Gastrocnemius medialis (tissue), 4 donors: ENCODE measurements at regions of chr15 and their contacts with region 1.

Region 1: GRCh38 chr15:32943711-32944110 is 225.9 kb downstream of the GREM1 start:
- DNase-seq: no peak
- ATAC-seq: no peak
- H3K4me3 ChIP-seq: no peak overlapping the region
- H3K27ac ChIP-seq: no peak overlapping the region
- H3K4me1 ChIP-seq: no peaks in the 10 kb centered on the region
- H3K27me3 ChIP-seq: no peaks in the 10 kb centered on the region
- CTCF ChIP-seq: no peak
- POLR2A ChIP-seq: no peak

Region 2: DNA sequence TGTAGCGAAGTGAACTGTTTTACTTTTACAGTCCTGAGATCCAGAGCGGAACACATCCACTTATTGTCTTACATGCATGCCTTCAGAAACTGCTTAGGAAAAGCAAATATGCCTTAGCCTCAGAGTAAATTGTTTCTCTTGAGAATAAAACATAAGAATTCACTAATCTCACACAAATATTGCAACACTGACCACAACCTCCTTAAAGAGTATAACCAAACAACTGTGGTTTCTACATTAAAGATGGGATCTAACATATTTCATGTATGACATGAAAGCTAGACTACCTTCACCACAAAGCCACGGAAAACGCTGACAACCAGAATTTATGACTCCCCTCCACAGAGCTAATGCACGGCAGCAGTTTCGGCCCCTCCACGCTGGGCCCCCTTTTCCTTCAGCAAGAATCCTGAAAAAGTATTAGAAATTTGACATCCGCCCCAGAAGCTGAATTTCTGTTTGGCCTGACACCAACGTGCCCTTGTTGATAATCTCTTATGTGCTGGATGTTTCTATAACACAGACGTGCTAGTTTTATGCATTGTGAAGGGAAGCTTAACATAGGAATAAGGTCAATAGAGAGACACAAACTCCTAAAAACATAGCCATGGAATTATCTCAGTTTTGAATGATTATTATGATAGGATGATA is 141.3 kb before region 1 on chr15:
- in situ Hi-C with region 1: no loop called
- intact Hi-C with region 1: no loop called
- DNase-seq: no peak
- ATAC-seq: no peak
- H3K4me3 ChIP-seq: no peak overlapping the region
- H3K27ac ChIP-seq: no peak overlapping the region
- H3K4me1 ChIP-seq: no peaks in the 10 kb centered on the region
- H3K27me3 ChIP-seq: no peaks in the 10 kb centered on the region
- CTCF ChIP-seq: no peak
- POLR2A ChIP-seq: no peak

Region 3: DNA sequence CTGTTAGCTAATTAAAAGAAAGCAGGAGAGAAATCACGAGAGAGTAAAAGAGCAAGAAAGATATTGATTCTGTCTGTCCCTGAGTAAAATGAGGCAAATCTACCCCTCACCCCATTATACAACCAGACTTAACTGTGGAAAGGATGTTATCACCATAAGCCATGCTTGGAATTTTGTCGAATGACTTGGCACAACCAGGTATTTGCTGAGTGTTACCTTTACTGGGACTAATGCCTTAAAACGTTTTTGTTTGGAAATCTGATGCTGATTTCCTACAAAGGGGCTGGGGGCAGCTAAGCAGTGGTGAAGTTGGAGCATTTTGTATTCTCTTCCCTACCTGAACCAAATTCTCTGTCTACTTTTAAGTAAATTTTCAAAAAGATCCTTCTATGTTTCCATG is 14.8 kb before region 1 on chr15:
- in situ Hi-C with region 1: no loop called
- intact Hi-C with region 1: loop called (anchors 1 kb)
- DNase-seq: no peak
- ATAC-seq: no peak
- H3K4me3 ChIP-seq: no peak overlapping the region
- H3K27ac ChIP-seq: no peak overlapping the region
- H3K4me1 ChIP-seq: no peaks in the 10 kb centered on the region
- H3K27me3 ChIP-seq: no peaks in the 10 kb centered on the region
- CTCF ChIP-seq: no peak
- POLR2A ChIP-seq: no peak

Region 4: GRCh38 chr15:33045066-33045810 is 101.5 kb after region 1 on chr15:
- in situ Hi-C with region 1: no loop called
- intact Hi-C with region 1: no loop called
- DNase-seq: no peak
- ATAC-seq: no peak
- H3K4me3 ChIP-seq: no peak overlapping the region
- H3K27ac ChIP-seq: no peak overlapping the region
- H3K4me1 ChIP-seq: no peaks in the 10 kb centered on the region
- H3K27me3 ChIP-seq: no peaks in the 10 kb centered on the region
- CTCF ChIP-seq: no peak
- POLR2A ChIP-seq: no peak

Region 5: GRCh38 chr15:33057845-33058244 is 114.1 kb after region 1 on chr15:
- in situ Hi-C with region 1: no loop called
- intact Hi-C with region 1: no loop called
- DNase-seq: no peak
- ATAC-seq: no peak
- H3K4me3 ChIP-seq: no peak overlapping the region
- H3K27ac ChIP-seq: no peak overlapping the region
- H3K4me1 ChIP-seq: no peaks in the 10 kb centered on the region
- H3K27me3 ChIP-seq: no peaks in the 10 kb centered on the region
- CTCF ChIP-seq: no peak
- POLR2A ChIP-seq: no peak

Region 6: GRCh38 chr15:33067941-33068481 is 124.3 kb after region 1 on chr15:
- in situ Hi-C with region 1: no loop called
- intact Hi-C with region 1: no loop called
- DNase-seq: peak; percentile 45 to 51
- ATAC-seq: peak; percentile 48 to 73
- H3K4me3 ChIP-seq: peak overlapping the region; percentile 32 to 42 (median 35)
- H3K27ac ChIP-seq: peak overlapping the region; percentile 6 to 49 (median 34)
- H3K4me1 ChIP-seq: peaks cover 8 to 11% of the 10 kb centered on the region in 2 donors
- H3K27me3 ChIP-seq: peaks cover 0 to 4% (median 0%) of the 10 kb centered on the region in 3 donors
- CTCF ChIP-seq: no peak
- POLR2A ChIP-seq: no peak